Activated naive CD4-positive, alpha-beta T cell treated with anti-CD3 and anti-CD28 coated beads for 36 hours (primary cell): ENCODE measurements at regions of chr6 and their contacts with region 1.

Region 1: DNA sequence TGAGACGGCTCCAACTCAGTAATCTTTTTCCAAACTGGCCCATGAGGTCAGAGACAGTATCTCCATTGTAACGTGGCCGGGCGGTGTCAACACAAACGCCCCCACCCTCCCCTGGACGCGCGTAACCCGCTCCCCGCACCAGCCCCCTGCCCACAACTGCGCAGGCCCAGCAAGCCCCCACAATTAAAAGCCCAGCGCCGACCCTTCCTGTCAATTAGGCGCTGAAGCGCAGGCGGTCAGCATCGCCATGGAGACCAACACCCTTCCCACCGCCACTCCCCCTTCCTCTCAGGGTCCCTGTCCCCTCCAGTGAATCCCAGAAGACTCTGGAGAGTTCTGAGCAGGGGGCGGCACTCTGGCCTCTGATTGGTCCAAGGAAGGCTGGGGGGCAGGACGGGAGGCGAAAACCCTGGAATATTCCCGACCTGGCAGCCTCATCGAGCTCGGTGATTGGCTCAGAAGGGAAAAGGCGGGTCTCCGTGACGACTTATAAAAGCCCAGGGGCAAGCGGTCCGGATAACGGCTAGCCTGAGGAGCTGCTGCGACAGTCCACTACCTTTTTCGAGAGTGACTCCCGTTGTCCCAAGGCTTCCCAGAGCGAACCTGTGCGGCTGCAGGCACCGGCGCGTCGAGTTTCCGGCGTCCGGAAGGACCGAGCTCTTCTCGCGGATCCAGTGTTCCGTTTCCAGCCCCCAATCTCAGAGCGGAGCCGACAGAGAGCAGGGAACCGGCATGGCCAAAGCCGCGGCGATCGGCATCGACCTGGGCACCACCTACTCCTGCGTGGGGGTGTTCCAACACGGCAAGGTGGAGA is at the starts of genes HSPA1A and HSPA1L:
- DNase-seq: peak; percentile 60
- H3K4me3 Mint-ChIP-seq: peak within 1 kb of the TSS; percentile 84
- H3K27ac Mint-ChIP-seq: peak within 1 kb of the TSS; percentile 96
- H3K4me1 Mint-ChIP-seq: peaks cover 54% of the 10 kb centered on the region
- H3K27me3 Mint-ChIP-seq: no peaks in the 10 kb centered on the region
- total RNA-seq, gene HSPA1A: 19.8 to 23.1 TPM
- total RNA-seq, gene HSPA1L: 0.86 to 0.95 TPM

Region 2: GRCh38 chr6:31752739-31753319 is 62.4 kb before region 1 on chr6:
- CTCF ChIA-PET with region 1: no interaction called
- intact Hi-C with region 1: no loop called
- DNase-seq: no peak
- H3K4me3 Mint-ChIP-seq: no peak overlapping the region
- H3K27ac Mint-ChIP-seq: no peak overlapping the region
- H3K4me1 Mint-ChIP-seq: no peaks in the 10 kb centered on the region
- H3K27me3 Mint-ChIP-seq: no peaks in the 10 kb centered on the region

Region 3: DNA sequence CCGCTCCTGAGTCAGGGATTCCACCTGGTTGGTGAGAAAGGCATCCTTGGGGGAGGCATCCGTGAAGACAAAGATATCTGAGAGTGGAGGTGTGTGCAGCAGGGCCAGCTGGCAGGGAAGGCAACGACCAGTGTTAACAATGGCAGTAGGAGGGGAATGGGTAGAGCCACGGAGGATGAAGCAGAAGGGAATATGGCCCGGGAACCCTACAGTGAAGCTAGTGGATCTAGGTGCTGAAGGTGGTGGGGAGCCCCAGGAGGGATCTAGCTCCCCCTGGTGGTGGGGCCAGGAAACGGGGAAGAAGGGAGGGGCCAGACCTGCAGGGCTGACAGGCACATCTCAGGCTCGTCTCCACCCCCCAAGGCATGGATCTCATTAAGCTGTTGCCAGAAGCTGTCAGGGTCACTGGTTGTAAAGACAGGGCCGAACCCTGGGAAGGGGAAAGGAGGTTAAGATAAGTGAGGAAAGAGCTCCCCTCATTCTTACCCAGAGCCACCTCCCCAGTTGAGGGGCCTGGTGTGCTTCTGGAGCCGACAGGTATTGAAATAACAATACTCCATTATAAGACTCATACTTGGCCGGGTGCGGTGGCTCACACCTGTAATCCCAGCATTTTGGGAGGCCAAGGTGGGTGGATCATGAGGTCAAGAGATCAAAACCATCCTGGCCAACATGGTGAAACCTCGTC is 45.4 kb before region 1 on chr6:
- CTCF ChIA-PET with region 1: interaction called, 5 read pairs
- intact Hi-C with region 1: loop called (anchors 2 kb)
- DNase-seq: peak; percentile 86
- H3K4me3 Mint-ChIP-seq: no peak overlapping the region
- H3K27ac Mint-ChIP-seq: no peak overlapping the region
- H3K4me1 Mint-ChIP-seq: peaks cover 27% of the 10 kb centered on the region
- H3K27me3 Mint-ChIP-seq: no peaks in the 10 kb centered on the region

Region 4: DNA sequence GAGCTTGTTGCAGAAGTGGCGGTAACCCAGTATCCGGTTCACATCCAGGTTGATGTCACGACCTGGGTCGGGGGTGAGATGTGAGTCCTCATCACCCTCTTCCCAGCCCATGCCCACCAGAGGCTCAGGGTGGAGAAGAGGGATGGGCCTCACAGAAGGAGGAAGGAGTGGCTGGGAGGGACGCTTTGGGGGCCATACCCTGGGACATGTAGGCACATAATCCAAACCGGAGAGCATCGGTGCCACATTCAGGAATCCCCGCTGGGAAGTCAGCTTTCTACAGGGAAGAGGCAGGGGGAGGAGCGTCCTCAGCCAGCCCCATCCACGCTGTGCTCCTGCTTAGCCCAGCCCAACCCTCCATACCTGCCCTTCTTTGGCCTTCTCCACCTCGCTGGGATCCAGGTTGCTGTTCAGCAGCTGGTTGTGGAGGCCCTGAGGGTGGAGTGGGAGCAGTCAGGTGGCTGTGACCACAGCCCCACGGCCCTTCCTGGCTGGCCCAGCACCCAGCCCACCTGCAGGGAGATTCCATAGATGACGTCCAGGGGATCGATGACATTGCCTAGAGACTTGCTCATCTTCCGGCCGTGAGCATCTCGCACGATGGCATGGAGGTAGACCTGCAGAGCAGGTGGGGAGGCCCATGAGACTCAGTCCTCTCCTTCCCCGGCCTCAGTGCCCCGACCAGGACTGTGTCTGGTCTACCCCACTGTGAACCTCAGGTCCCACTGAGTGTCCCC is 34.6 kb before region 1 on chr6:
- CTCF ChIA-PET with region 1: no interaction called
- intact Hi-C with region 1: no loop called
- DNase-seq: no peak
- H3K4me3 Mint-ChIP-seq: no peak overlapping the region
- H3K27ac Mint-ChIP-seq: no peak overlapping the region
- H3K4me1 Mint-ChIP-seq: peaks cover 18% of the 10 kb centered on the region
- H3K27me3 Mint-ChIP-seq: no peaks in the 10 kb centered on the region